Aorta (tissue), 5 donors: ENCODE measurements at regions of chr2 and their contacts with region 1.

Region 1: DNA sequence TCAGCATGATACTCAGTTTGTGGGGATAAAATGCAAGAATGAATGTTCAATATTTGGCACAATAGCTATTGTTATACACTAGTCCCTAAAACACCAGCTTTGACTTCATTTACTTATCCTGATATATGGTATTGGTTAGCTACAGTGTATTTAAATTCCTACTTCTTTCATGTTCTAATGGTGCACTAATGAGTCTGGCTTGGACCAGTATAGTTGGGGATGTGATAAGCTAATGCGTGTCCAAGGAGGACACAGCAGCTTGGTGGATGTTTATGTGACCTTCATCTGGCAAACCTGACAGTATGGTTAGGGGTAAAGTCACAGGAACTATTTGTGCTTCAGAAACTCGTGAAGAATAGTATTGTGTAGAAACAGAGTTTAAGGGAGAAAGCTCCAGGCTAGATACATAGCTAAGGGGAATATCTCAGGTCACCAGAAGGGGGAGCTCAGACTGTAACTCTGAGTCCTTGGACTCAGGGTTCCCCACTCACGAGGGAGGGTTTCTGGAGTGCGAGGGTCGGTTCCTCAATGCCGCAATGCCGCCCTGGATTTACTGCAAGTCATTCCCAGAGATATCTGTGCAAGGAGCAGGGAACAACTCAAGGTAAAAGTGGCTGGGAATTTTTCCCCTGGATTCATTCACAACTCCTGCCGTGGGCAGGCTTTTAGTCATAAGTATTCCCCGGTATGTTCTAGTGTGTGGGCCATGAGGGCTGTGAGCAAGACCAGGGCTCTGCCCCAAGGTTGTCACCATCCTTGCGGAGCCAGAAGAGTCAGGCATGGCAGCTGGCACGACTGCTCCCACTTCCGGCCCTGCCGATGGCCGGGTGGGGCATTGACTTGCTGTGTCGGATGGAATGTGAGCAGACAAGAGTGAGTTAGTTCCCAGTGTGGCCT is 14.5 kb downstream of the IL1R2 start:
- DNase-seq: no peak
- ATAC-seq: peak; percentile 75
- H3K4me3 ChIP-seq: no peak overlapping the region
- H3K27ac ChIP-seq: no peak overlapping the region
- H3K4me1 ChIP-seq: no peaks in the 10 kb centered on the region
- H3K27me3 ChIP-seq: no peaks in the 10 kb centered on the region

Region 2: GRCh38 chr2:102187496-102188150 is 181.4 kb after region 1 on chr2:
- intact Hi-C with region 1: no loop called
- DNase-seq: peak; percentile 70 to 87
- ATAC-seq: peak; percentile 85
- H3K4me3 ChIP-seq: peak overlapping the region; percentile 27 to 34
- H3K27ac ChIP-seq: no peak overlapping the region
- H3K4me1 ChIP-seq: no peaks in the 10 kb centered on the region
- H3K27me3 ChIP-seq: no peaks in the 10 kb centered on the region

Region 3: DNA sequence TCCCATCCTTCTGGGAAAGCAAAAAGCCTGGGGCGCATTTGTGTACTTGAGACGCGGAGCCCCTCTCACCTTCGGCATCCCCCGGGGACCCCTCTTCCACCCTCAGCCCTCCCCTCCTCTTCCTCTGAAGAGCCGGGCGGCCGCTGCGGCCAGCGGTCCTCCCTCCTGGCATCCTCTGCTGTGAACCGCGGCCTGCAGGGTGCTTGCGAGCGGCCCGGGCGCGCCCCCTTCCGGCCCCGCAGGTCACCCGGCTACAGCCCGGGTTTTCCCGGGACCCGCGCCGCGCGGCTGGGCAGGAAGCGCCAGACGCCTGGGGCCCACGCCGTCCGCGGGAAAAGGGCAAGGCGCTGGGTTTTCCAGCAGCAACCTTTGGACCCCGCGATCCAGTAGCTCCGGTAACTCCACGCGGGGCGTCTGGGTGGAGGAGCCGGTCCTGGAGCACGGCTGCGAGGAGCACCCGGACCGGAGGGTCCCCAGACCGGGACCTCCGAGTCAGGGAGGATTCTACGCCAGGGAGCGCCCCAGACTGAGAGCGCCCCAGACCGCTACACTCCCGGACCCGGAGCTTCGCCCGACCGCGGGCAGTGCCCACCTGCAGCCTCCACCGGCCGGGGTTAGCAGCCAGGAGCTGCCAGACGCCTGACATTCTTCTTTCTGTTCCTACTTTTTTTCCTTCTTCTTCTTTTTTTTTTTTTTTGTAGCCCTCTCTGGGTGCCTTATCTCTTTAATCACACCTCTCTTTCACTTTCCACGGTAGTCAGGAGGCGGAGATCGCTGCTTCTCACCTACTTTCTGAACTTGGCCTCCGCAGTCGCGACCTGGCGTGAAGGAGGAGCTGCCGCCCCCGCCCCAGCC is 349.5 kb after region 1 on chr2 and contains the start of gene IL18R1:
- intact Hi-C with region 1: loop called in 1 of 2 experiments (anchors 10 kb)
- DNase-seq: peak; percentile 86 to 93
- ATAC-seq: peak; percentile 97
- H3K4me3 ChIP-seq: peak within 1 kb of the TSS; percentile 39 to 74
- H3K27ac ChIP-seq: no peak within 1 kb of the TSS
- H3K4me1 ChIP-seq: no peaks in the 10 kb centered on the region
- H3K27me3 ChIP-seq: no peaks in the 10 kb centered on the region
- total RNA-seq, gene IL18R1: 8.0 to 11.0 TPM

Region 4: GRCh38 chr2:102449370-102449974 is 443.2 kb after region 1 on chr2:
- intact Hi-C with region 1: loop called in 1 of 2 experiments (anchors 5 kb)
- DNase-seq: no peak
- ATAC-seq: no peak
- H3K4me3 ChIP-seq: no peak overlapping the region
- H3K27ac ChIP-seq: no peak overlapping the region
- H3K4me1 ChIP-seq: no peaks in the 10 kb centered on the region
- H3K27me3 ChIP-seq: no peaks in the 10 kb centered on the region